Right ventricle myocardium inferior (tissue), 1 donor: ENCODE measurements at regions of chr3 and their contacts with region 1.

Region 1: GRCh38 chr3:54783611-54784010 is 144.2 kb downstream of the LRTM1 start:
- DNase-seq: no peak
- ATAC-seq: no peak

Region 2: GRCh38 chr3:54599716-54600115 is 183.9 kb before region 1 on chr3:
- intact Hi-C with region 1: loop called (anchors 10 kb)
- DNase-seq: peak; percentile 81
- ATAC-seq: peak; percentile 84

Region 3: GRCh38 chr3:54837964-54838363 is 54.4 kb after region 1 on chr3:
- intact Hi-C with region 1: no loop called
- DNase-seq: no peak
- ATAC-seq: no peak